ENCODE measurements at regions of chr9 and their contacts with region 1.

Region 1: DNA sequence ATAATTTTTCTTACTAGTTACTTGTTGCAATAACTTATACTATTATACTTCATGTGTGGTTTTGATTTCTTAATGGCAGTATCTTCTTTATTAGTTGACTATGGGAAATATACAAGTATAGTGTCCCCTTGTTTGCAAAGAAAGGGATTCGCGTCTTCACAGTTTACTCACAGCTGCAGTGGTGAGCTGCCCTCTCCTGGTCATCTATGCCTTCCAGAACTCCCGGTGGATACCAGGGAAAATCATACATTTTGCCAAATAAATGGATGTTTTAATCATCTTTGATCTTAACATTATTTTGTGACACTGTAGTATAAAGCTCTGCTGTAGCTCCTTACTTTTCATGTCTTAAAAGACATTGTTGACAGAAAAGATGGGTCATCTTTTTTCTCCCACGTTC is 142.0 kb downstream of the ZCCHC7 start:
- DNase-seq: no peak
- H3K4me3 ChIP-seq: no peak overlapping the region
- H3K27ac ChIP-seq: no peak overlapping the region
- H3K4me1 ChIP-seq: no peaks in the 10 kb centered on the region
- H3K27me3 ChIP-seq: no peaks in the 10 kb centered on the region
- CTCF ChIP-seq: peak; percentile 58

Region 2: GRCh38 chr9:36862206-36863145 is 399.9 kb before region 1 on chr9:
- intact Hi-C with region 1: loop called (anchors 10 kb)
- DNase-seq: no peak
- H3K4me3 ChIP-seq: no peak overlapping the region
- H3K27ac ChIP-seq: no peak overlapping the region
- H3K4me1 ChIP-seq: no peaks in the 10 kb centered on the region
- H3K27me3 ChIP-seq: peaks cover 99% of the 10 kb centered on the region
- CTCF ChIP-seq: peak; percentile 73

Measured in left ventricle myocardium inferior (tissue), 1 donor.